ENCODE measurements at regions of chr5 and their contacts with region 1.

Region 1: GRCh38 chr5:100623719-100624118 is 88.5 kb downstream of the FAM174A start:
- DNase-seq: peak; percentile 18
- H3K4me3 ChIP-seq: no peak overlapping the region
- H3K27ac ChIP-seq: no peak overlapping the region
- H3K4me1 ChIP-seq: no peaks in the 10 kb centered on the region
- H3K27me3 ChIP-seq: no peaks in the 10 kb centered on the region
- CTCF ChIP-seq: peak; percentile 53

Region 2: DNA sequence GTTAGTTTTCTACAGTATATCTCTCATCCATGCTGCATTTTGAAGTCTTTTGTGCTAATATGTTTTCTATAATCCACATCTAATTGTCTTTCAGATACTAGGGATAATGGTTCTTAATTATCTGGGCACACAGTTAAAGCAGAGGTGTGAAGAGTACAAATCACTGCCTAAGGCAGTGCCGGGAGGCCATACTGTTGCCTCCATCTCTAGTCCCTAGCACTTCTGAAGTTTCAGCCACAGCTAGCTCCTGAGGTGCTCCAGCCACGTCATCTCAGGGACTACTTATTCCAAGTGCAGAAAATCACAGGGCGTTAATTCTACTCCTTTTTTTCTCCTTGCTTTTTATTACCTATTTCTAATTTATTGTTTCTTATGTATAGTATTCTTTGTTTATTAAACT is 848.5 kb before region 1 on chr5:
- CTCF ChIA-PET with region 1: no interaction called
- POLR2A ChIA-PET with region 1: no interaction called
- intact Hi-C with region 1: no loop called
- DNase-seq: no peak
- H3K4me3 ChIP-seq: no peak overlapping the region
- H3K27ac ChIP-seq: no peak overlapping the region
- H3K4me1 ChIP-seq: no peaks in the 10 kb centered on the region
- H3K27me3 ChIP-seq: no peaks in the 10 kb centered on the region
- CTCF ChIP-seq: no peak

Region 3: DNA sequence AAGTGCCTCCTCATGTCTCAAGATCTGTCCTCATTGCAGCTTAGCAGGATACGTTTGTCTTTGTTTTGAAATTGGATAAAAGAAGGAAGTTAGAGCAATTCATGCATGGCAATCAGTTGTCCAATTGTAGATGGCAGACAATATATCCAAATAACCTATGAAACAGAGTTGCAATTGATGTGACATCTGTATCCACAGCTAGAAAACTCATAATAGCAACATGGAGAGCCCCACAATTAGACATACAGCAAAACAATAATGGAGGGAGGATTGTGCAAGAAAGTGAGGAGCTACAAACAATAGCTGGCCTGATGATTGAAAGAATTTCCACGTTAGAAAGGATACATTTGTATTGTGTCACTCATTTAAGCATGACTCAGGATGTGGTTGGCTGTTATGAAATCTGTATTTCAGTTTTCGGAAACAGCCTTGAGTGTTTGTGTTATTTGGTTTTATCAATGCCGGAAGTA is 43.5 kb after region 1 on chr5:
- CTCF ChIA-PET with region 1: no interaction called
- POLR2A ChIA-PET with region 1: no interaction called
- intact Hi-C with region 1: no loop called
- DNase-seq: peak; percentile 48
- H3K4me3 ChIP-seq: no peak overlapping the region
- H3K27ac ChIP-seq: no peak overlapping the region
- H3K4me1 ChIP-seq: no peaks in the 10 kb centered on the region
- H3K27me3 ChIP-seq: no peaks in the 10 kb centered on the region
- CTCF ChIP-seq: no peak

Region 4: GRCh38 chr5:100903039-100903887 is 279.5 kb after region 1 on chr5 and contains the start of gene ST8SIA4:
- CTCF ChIA-PET with region 1: no interaction called
- POLR2A ChIA-PET with region 1: no interaction called
- intact Hi-C with region 1: loop called (anchors 10 kb)
- DNase-seq: peak; percentile 71
- H3K4me3 ChIP-seq: peak within 1 kb of the TSS; percentile 36
- H3K27ac ChIP-seq: no peak within 1 kb of the TSS
- H3K4me1 ChIP-seq: peaks cover 15% of the 10 kb centered on the region
- H3K27me3 ChIP-seq: peaks cover 85% of the 10 kb centered on the region
- CTCF ChIP-seq: no peak
- total RNA-seq, gene ST8SIA4: 0.35 and 0.47 TPM in 2 replicates

Region 5: DNA sequence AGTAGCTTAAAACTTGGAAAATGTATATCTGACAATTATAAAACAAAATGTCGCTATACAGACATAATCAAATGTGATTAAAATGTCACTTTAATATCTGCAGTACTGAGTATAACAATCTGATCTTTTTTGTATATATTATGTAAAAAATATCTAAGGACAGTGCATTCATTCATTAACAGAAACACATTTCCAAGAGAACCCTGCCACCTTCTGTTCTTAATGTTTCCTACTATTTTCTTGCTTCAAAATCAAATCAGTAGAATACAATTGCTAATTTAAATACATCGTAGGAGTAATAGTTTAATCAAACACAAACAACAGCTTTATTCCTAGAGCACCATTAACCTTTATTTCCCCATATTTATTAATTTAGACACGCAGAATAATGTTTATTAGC is 422.0 kb after region 1 on chr5:
- CTCF ChIA-PET with region 1: no interaction called
- POLR2A ChIA-PET with region 1: no interaction called
- intact Hi-C with region 1: loop called (anchors 5 kb)
- DNase-seq: peak; percentile 2
- H3K4me3 ChIP-seq: no peak overlapping the region
- H3K27ac ChIP-seq: no peak overlapping the region
- H3K4me1 ChIP-seq: no peaks in the 10 kb centered on the region
- H3K27me3 ChIP-seq: no peaks in the 10 kb centered on the region
- CTCF ChIP-seq: peak; percentile 29; the same call in 1 of the 2 replicates

Region 6: GRCh38 chr5:101385276-101385675 is 761.6 kb after region 1 on chr5:
- CTCF ChIA-PET with region 1: no interaction called
- POLR2A ChIA-PET with region 1: no interaction called
- intact Hi-C with region 1: loop called (anchors 5 kb)
- DNase-seq: no peak
- H3K4me3 ChIP-seq: no peak overlapping the region
- H3K27ac ChIP-seq: no peak overlapping the region
- H3K4me1 ChIP-seq: no peaks in the 10 kb centered on the region
- H3K27me3 ChIP-seq: no peaks in the 10 kb centered on the region
- CTCF ChIP-seq: no peak

Measured in A673 (cell line).